ENCODE measurements at regions of chr1 and their contacts with region 1.

Region 1: GRCh38 chr1:38559161-38559824 is 300.3 kb downstream of the RRAGC start:
- DNase-seq: peak; percentile 88
- H3K4me3 Mint-ChIP-seq: peak overlapping the region; percentile 70
- H3K27ac Mint-ChIP-seq: peak overlapping the region; percentile 92
- H3K4me1 Mint-ChIP-seq: peaks cover 69% of the 10 kb centered on the region
- H3K27me3 Mint-ChIP-seq: peaks cover 40% of the 10 kb centered on the region

Region 2: GRCh38 chr1:38527373-38527966 is 31.8 kb before region 1 on chr1:
- intact Hi-C with region 1: loop called (anchors 1 kb)
- DNase-seq: peak; percentile 71
- H3K4me3 Mint-ChIP-seq: peak overlapping the region; percentile 13
- H3K27ac Mint-ChIP-seq: peak overlapping the region; percentile 54
- H3K4me1 Mint-ChIP-seq: peaks cover 18% of the 10 kb centered on the region
- H3K27me3 Mint-ChIP-seq: peaks cover 9% of the 10 kb centered on the region

Region 3: DNA sequence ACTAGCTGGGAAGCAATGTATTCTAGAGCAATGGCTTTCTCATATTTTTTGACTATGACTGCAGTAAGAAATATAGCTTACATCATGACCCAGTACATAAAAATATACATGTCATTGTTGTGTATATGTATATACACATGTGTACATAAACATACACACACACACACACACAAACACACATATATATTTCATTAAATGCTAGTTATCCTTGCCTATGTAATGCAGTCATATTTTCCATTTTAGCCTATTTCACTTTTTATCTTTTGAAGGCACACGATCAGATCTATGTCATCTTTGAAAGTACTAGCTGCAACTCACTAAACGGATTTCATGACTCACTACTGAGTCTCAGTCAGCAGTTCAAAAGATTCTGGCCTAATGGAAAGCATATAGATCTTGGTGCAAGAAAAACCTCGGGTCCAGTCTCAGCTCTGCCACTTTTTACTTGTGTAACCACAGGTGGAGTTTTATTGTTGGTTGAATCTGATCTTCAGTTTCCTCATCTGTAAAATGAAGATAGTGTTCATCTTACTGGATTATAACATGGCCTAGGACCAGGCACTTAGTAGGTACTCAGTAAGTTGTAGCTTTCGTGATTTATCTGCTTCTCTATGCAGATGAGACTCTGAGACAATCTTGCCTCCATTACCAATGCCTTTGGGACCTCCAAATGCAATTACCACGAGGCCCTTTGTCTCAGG is 25.4 kb before region 1 on chr1:
- intact Hi-C with region 1: loop called (anchors 1 kb)
- DNase-seq: no peak
- H3K4me3 Mint-ChIP-seq: no peak overlapping the region
- H3K27ac Mint-ChIP-seq: peak overlapping the region; percentile 59
- H3K4me1 Mint-ChIP-seq: peaks cover 9% of the 10 kb centered on the region
- H3K27me3 Mint-ChIP-seq: peaks cover 10% of the 10 kb centered on the region